ENCODE measurements at regions of chr1 and their contacts with region 1.

Region 1: DNA sequence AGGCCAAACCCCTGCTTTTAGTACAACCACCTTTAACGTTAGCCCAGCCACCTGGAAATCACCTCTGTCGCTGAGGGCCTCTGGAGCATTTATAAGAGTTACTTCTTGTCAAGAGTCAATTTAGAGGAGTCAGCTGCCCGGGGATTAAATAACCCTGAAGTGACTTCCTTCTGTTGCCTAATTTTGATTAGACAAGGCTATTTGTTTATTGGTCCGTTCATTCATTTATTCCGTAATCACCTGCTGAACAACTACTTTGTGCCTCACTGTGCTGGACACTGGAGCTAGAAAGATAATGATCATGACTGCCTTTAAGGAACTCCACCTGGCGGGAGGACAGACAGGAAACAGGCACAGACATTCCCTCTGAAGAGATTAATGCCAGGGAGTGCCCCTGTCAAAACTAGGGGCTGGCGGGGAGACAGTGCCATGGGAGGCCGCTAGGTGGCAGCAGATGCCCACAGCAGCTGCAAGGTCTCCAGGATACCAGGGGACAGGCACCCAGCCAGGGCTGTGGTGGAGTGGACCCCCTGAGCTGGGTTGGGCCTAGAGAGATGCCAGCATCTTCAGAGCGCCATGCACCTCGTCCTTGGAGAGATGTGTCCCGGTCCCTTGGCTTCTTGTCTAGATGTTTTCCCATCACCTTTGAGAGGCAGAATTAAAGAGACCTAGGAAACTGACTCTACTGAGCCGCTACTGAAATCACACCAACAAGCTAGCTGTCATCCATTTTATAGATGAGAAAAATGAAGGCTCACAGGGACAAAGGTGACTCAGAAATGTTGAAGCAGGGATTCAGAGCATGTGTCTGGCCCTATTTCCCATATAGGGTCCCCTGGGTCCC is 3.7 kb downstream of the REN start:
- ATAC-seq: peak; percentile 89 to 99 (median 96)
- H3K4me3 ChIP-seq: no peak overlapping the region
- H3K27ac ChIP-seq: no peak overlapping the region
- H3K4me1 ChIP-seq: peaks cover 9 to 14% of the 10 kb centered on the region in 2 donors

Region 2: GRCh38 chr1:204363335-204364124 is 201.1 kb after region 1 on chr1:
- in situ Hi-C with region 1: loop called in 6 of 9 experiments (anchors 25 kb)
- ATAC-seq: peak in 6 of 8 experiments; percentile 2 to 73 (median 34)
- H3K4me3 ChIP-seq: peak overlapping the region in 4 of 5 donors; percentile 3 to 18 (median 12)
- H3K27ac ChIP-seq: peak overlapping the region; percentile 0 to 19
- H3K4me1 ChIP-seq: peaks cover 18% of the 10 kb centered on the region in 2 donors

Region 3: DNA sequence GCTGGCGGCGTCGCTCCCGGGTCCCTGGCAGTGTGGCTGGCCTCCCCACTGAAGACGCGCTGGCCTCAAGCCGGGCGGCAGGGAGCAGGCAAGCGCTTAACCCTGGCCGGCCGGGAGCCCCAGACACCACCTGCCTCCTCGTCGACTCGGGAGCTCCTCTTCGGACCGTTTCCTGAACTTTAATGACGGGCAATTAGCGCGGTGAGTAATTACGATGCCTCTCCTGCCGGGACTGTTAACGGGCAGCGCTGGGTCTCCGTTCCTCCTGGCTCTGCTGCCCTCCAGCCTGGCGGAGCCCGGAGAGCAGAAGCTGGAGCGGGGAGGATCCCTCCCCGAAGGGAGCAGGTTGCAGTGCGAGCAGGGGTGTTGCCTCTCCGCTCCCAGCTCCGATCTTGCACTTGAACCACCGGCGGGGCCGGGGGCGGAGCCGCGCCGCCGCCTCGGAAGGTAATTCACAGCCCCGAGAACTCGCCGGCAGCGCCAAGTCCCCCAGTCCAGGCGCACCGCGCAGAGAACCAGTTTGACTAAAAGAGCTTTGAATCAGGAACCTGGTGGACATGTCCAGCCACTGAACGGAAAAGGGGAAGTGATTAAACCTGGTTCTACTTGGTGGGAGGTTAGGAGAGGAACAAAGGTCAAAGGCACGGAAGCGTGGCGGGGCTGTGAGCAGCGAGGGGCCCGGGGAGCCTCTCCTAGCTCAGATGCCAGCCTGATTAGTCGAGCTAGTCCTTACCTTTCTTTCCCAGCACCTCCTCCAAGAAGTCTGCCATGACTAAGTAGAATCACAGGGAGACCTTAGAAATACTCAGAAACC is 215.5 kb after region 1 on chr1:
- in situ Hi-C with region 1: loop called in 8 of 9 experiments (anchors 10 to 25 kb)
- ATAC-seq: peak; percentile 83 to 88 (median 88)
- H3K4me3 ChIP-seq: peak overlapping the region; percentile 21 to 34 (median 24)
- H3K27ac ChIP-seq: no peak overlapping the region
- H3K4me1 ChIP-seq: peaks cover 4 to 7% of the 10 kb centered on the region in 2 donors

Region 4: GRCh38 chr1:204516180-204516879 is 353.9 kb after region 1 on chr1 and contains the start of gene MDM4:
- in situ Hi-C with region 1: loop called in 1 of 9 experiments (anchors 25 kb)
- ATAC-seq: peak; percentile 98 to 99 (median 99)
- H3K4me3 ChIP-seq: peak within 1 kb of the TSS; percentile 76 to 95 (median 94)
- H3K27ac ChIP-seq: peak within 1 kb of the TSS; percentile 96 to 97
- H3K4me1 ChIP-seq: peaks cover 11 to 14% of the 10 kb centered on the region in 2 donors
- total RNA-seq, gene MDM4: 28.7 to 139 (median 40.1) TPM

Measured in motor neuron (in vitro differentiated cells).